Motor neuron (in vitro differentiated cells): ENCODE measurements at regions of chr20 and their contacts with region 1.

Region 1: DNA sequence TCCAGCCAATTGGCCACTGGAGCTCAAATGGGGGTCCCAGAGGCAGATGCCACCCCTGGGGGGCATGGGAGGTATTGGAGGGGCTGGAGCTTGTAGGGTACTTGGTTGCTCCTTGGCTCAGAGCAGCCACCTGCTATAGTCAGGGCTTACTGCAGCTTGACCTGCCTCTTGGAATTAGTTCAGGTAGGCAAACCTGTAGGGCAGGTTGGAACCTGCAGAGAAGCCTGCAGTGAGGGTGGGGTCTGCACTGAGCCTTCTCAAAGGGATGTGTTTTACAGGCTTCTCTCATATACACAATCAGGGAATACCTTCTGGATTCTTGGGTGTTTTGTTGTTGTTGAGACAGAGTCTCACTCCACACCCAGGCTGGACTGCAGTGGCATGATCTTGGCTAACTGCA is 94.2 kb upstream of the MYL9 start:
- ATAC-seq: no peak
- H3K4me3 ChIP-seq: no peak overlapping the region
- H3K27ac ChIP-seq: no peak overlapping the region
- H3K4me1 ChIP-seq: no peaks in the 10 kb centered on the region

Region 2: DNA sequence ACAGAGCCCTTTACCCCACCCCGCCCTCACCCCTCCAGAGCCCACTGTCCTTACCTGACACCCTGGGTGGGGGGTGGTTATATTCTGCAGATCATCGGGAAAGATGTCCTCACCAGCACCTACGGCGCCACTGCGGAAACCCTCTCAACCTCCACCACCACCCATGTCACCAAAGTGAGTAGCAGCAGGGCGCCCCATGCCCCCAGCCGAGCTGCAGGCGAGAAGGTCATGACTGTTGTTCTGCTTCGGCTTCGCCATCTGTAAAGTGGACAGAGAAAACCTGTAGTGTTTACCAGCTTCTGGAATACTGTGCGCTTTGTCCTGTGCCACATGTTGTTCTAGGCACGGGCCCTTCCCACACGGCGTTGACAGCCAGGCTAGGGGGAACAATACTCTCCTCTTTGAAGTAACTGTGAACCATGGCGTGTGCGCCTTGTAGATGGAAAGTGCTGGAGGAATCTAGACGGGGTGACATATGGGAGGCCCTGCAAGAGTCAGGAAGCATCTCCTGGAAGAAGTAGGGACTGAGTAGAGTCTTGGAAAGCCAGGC is 227.4 kb before region 1 on chr20:
- in situ Hi-C with region 1: loop called in 8 of 9 experiments (anchors 10 to 25 kb)
- ATAC-seq: no peak
- H3K4me3 ChIP-seq: no peak overlapping the region
- H3K27ac ChIP-seq: no peak overlapping the region
- H3K4me1 ChIP-seq: peaks cover 0 to 4% of the 10 kb centered on the region in 2 donors